ENCODE measurements at regions of chr11 and their contacts with region 1.

Region 1: DNA sequence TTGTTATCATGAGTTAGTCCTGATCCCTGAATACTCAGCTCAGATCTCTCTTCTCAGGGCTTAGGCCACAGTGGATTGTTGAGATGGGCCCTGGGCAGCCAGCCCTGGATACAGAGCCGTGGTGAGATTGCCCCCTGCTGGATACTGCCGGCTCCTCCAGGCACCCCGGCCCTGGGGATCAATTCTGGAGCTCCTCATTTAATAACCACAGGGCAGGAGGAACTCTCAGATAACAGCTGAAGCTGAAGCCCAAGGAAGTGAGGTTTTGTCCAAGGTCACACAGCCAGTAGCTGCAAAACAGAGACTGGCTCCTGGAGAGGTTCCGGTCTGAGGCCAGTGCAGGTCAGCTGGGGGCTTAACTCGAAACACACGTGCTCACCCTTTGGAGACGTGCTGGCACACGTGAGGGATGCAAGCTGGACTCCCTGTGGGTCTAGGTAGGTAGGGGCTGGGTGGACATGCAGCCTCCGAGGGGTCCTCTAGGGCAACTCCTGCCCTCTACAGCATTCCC is 16.0 kb downstream of the USH1C start:
- DNase-seq: peak in 1 of 2 experiments; percentile 90
- H3K4me3 ChIP-seq: no peak overlapping the region
- H3K27ac ChIP-seq: 0 out of 2 replicates have a peak overlapping the region, but pooled peaks have one; percentile 27
- H3K4me1 ChIP-seq: peaks cover 0 to 3% (median 0%) of the 10 kb centered on the region in 4 experiments; a peak in 3 of 7 replicates
- H3K27me3 ChIP-seq: no peaks in the 10 kb centered on the region
- CTCF ChIP-seq: peak; percentile 80 to 93 (median 83)
- EP300 ChIP-seq: no peak
- POLR2A ChIP-seq: no peak
- RAD21 ChIP-seq: peak; percentile 85 to 91

Region 2: GRCh38 chr11:17354601-17354991 is 173.6 kb before region 1 on chr11:
- CTCF ChIA-PET with region 1: interaction called, 12 read pairs
- POLR2A ChIA-PET with region 1: no interaction called
- DNase-seq: peak in 1 of 2 experiments; percentile 80
- H3K4me3 ChIP-seq: no peak overlapping the region
- H3K27ac ChIP-seq: no peak overlapping the region
- H3K4me1 ChIP-seq: peaks cover 0 to 8% (median 4%) of the 10 kb centered on the region in 4 experiments; a peak in 5 of 7 replicates
- H3K27me3 ChIP-seq: peaks cover 29 to 47% (median 40%) of the 10 kb centered on the region in 4 experiments
- CTCF ChIP-seq: peak in 2 of 3 experiments; percentile 54 to 59; a peak in 2 of 4 replicates
- EP300 ChIP-seq: no peak
- POLR2A ChIP-seq: no peak
- RAD21 ChIP-seq: peak; percentile 26 to 54; a peak in 3 of 4 replicates

Region 3: DNA sequence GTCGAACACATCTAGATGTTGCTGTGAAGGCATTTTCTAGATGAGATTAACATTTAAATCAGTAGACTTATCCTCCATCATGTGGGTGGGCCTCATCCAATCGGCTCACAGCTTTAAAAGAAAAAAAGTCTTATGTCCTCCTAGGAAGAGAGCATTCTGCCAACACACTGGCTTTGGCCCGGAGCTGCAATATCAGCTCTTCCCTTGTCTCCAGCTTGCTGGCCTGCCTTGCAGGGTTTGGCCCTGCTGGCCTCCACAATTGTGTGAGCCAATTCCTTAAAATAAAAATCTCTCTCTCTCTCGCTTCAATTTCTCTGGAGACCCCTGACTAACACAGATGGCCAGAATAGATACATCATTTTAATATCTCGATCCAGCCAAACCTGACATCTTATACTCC is 38.5 kb before region 1 on chr11:
- CTCF ChIA-PET with region 1: interaction called, 15 read pairs
- POLR2A ChIA-PET with region 1: no interaction called
- DNase-seq: no peak
- H3K4me3 ChIP-seq: no peak overlapping the region
- H3K27ac ChIP-seq: no peak overlapping the region
- H3K4me1 ChIP-seq: no peaks in the 10 kb centered on the region; a peak in 1 of 7 replicates
- H3K27me3 ChIP-seq: 0 out of 7 replicates have a peak, but pooled peaks cover 0 to 2% (median 0%) of the 10 kb centered on the region in 4 experiments
- CTCF ChIP-seq: no peak
- EP300 ChIP-seq: no peak
- POLR2A ChIP-seq: no peak
- RAD21 ChIP-seq: no peak

Region 4: DNA sequence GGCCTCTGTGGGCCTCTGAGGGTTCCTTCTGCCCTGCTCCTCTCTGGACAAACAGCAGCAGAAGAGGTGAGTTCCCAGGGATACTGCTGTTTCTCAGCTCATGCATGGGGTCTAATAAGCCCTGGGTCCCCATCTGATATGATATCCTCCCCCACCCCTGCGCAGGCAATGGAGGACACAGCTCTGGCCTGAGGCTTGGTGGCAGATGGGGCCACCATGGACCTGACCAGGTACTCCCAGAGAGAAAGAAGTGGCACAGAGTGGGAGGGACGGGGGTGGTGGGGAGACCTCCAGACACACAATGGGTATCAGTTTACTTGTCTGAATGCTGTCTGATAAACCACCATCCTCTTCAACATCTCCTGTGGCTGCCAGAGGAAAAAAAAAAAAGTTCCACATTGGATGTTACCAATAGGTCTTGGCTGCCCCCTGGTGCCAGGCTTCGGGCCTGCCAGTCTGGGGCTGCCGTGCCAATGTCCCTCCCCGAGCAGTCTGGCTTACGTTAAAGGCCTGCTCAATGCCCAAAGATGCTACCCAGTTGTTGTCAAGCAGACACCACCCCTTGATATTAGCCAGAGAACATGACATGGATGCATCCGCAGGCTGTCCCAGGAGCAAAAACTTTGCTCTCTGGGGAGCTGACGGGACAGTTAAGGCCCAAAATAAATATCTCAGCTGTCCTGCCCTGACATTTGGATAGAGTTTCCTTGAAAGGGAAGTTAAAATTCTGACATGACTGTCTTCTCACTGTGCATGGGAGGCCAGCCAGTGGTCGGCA is 23.7 kb before region 1 on chr11:
- CTCF ChIA-PET with region 1: interaction called, 494 read pairs
- POLR2A ChIA-PET with region 1: interaction called, 3 read pairs
- DNase-seq: peak in 1 of 2 experiments; percentile 93
- H3K4me3 ChIP-seq: no peak overlapping the region
- H3K27ac ChIP-seq: no peak overlapping the region
- H3K4me1 ChIP-seq: no peaks in the 10 kb centered on the region; a peak in 1 of 7 replicates
- H3K27me3 ChIP-seq: peaks cover 0 to 2% (median 0%) of the 10 kb centered on the region in 4 experiments; a peak in 1 of 7 replicates
- CTCF ChIP-seq: peak; percentile 87 to 96 (median 91)
- EP300 ChIP-seq: no peak
- POLR2A ChIP-seq: no peak
- RAD21 ChIP-seq: peak; percentile 95 to 98

Region 5: DNA sequence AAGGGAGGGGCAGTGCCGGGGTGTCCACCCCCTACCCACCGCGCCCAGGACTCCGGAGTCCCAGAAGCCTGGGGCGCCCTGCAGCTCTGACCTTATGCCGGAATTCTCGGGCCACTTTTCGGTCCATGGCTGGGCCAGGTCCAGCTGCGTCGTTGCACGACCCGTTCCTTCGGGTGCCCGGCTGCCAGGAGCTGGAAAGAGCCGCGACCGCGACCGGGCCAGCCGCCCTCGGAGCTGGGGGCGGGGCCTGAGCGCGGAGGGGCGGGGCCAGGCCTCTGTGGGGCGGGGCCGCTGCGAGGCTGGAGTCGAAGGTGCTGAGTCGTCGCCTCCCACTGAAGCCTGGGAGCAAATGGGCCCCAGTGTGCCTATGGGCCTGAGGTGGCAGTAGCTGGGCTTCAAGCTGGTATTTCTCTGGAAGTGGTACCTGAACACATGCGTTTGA is 16.0 kb after region 1 on chr11 and contains the start of gene USH1C:
- CTCF ChIA-PET with region 1: interaction called, 25 read pairs
- POLR2A ChIA-PET with region 1: interaction called, 3 read pairs
- DNase-seq: peak in 1 of 2 experiments; percentile 95
- H3K4me3 ChIP-seq: peak within 1 kb of the TSS; percentile 50 to 77 (median 62)
- H3K27ac ChIP-seq: no peak within 1 kb of the TSS
- H3K4me1 ChIP-seq: peaks cover 6 to 20% (median 9%) of the 10 kb centered on the region in 4 experiments
- H3K27me3 ChIP-seq: peaks cover 0 to 24% (median 8%) of the 10 kb centered on the region in 4 experiments; a peak in 4 of 7 replicates
- CTCF ChIP-seq: no peak
- EP300 ChIP-seq: no peak
- POLR2A ChIP-seq: no peak; a peak in 1 of 3 replicates
- RAD21 ChIP-seq: no peak
- total RNA-seq, gene USH1C: 1.3 and 2.4 TPM in 2 replicates

Region 6: GRCh38 chr11:17590463-17590862 is 62.2 kb after region 1 on chr11:
- CTCF ChIA-PET with region 1: no interaction called
- POLR2A ChIA-PET with region 1: no interaction called
- DNase-seq: peak in 1 of 2 experiments; percentile 19
- H3K4me3 ChIP-seq: no peak overlapping the region
- H3K27ac ChIP-seq: no peak overlapping the region
- H3K4me1 ChIP-seq: no peaks in the 10 kb centered on the region
- H3K27me3 ChIP-seq: no peaks in the 10 kb centered on the region
- CTCF ChIP-seq: no peak
- EP300 ChIP-seq: no peak
- POLR2A ChIP-seq: no peak
- RAD21 ChIP-seq: no peak

Region 7: GRCh38 chr11:17711836-17712235 is 183.6 kb after region 1 on chr11:
- CTCF ChIA-PET with region 1: no interaction called
- POLR2A ChIA-PET with region 1: no interaction called
- DNase-seq: no peak
- H3K4me3 ChIP-seq: no peak overlapping the region
- H3K27ac ChIP-seq: no peak overlapping the region
- H3K4me1 ChIP-seq: 0 out of 7 replicates have a peak, but pooled peaks cover 0 to 2% (median 0%) of the 10 kb centered on the region in 4 experiments
- H3K27me3 ChIP-seq: peaks cover 3 to 32% (median 15%) of the 10 kb centered on the region in 4 experiments
- CTCF ChIP-seq: no peak
- EP300 ChIP-seq: no peak
- POLR2A ChIP-seq: no peak
- RAD21 ChIP-seq: no peak

Measured in H1 (cell line).